Aorta (tissue), 5 donors: ENCODE measurements at regions of chr7 and their contacts with region 1.

Region 1: GRCh38 chr7:122528879-122529481 is 169.9 kb downstream of the RNF133 start:
- DNase-seq: no peak
- ATAC-seq: no peak
- H3K4me3 ChIP-seq: no peak overlapping the region
- H3K27ac ChIP-seq: no peak overlapping the region
- H3K4me1 ChIP-seq: no peaks in the 10 kb centered on the region
- H3K27me3 ChIP-seq: no peaks in the 10 kb centered on the region

Region 2: GRCh38 chr7:122092964-122093797 is 435.8 kb before region 1 on chr7:
- intact Hi-C with region 1: loop called in 1 of 2 experiments (anchors 10 kb)
- DNase-seq: peak in 1 of 2 donors; percentile 68
- ATAC-seq: no peak
- H3K4me3 ChIP-seq: no peak overlapping the region
- H3K27ac ChIP-seq: no peak overlapping the region
- H3K4me1 ChIP-seq: no peaks in the 10 kb centered on the region
- H3K27me3 ChIP-seq: no peaks in the 10 kb centered on the region

Region 3: DNA sequence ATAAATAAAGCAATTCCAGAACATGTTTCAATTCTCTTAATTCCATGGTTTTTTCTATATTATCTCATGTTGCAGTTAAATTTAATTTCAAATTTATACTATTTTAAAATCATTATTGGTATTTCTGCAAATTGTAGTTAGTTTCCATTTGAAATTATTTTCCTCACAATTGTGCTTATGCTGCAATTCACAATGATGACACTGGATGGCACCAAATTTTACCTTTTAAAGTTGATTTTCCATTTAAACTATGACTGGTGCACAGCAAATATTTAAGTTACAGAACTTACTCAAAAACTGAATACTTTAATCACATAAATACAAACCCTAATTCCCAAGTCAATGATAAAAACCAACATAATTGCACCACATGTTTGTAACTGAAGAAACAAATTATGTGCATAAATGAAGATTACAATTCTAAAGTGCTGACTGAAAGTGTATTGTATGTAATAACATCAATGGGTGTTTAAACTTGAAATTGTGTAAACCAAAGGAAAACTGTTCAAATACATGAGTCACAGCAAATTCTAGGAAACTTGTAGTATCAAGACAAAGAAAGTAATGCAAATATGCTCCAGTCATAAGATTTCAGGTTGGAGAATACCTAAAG is 309.6 kb before region 1 on chr7:
- intact Hi-C with region 1: loop called (anchors 2 to 5 kb)
- DNase-seq: no peak
- ATAC-seq: no peak
- H3K4me3 ChIP-seq: no peak overlapping the region
- H3K27ac ChIP-seq: no peak overlapping the region
- H3K4me1 ChIP-seq: no peaks in the 10 kb centered on the region
- H3K27me3 ChIP-seq: no peaks in the 10 kb centered on the region

Region 4: GRCh38 chr7:122442929-122443328 is 86.1 kb before region 1 on chr7:
- intact Hi-C with region 1: no loop called
- DNase-seq: no peak
- ATAC-seq: no peak
- H3K4me3 ChIP-seq: no peak overlapping the region
- H3K27ac ChIP-seq: no peak overlapping the region
- H3K4me1 ChIP-seq: no peaks in the 10 kb centered on the region
- H3K27me3 ChIP-seq: no peaks in the 10 kb centered on the region

Region 5: DNA sequence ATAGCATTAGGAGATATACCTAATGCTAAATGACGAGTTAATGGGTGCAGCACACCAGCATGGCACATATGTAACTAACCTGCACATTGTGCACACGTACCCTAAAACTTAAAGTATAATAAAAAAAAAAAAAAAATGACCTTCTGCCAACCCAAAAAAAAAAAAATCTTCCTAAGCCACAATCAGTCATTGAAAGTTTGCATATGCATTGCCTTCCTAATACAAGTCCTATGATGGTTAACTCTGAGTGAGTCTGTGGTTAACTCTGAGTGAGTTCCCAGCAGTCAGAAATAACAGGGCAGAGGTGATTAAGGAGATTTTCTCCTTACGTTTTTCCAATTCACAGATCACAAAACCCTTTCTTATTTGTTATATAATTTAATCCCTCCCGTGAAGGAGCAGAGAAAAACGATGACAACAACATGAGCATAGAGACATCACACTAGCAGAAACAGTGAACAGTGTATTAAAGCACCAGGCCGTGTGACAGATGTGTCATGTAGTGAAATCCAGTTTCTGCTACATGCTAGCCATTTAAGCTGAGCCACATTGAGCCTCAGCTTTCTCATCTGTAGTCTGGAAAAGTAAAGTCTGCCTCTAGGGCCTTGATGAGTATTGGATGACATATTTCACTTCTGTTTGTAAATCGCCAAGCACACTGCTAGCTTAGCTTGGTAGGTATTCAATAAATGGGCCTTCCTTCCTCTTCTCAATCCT is 181.1 kb after region 1 on chr7:
- intact Hi-C with region 1: no loop called
- DNase-seq: no peak
- ATAC-seq: no peak
- H3K4me3 ChIP-seq: no peak overlapping the region
- H3K27ac ChIP-seq: no peak overlapping the region
- H3K4me1 ChIP-seq: no peaks in the 10 kb centered on the region
- H3K27me3 ChIP-seq: no peaks in the 10 kb centered on the region